ENCODE measurements at regions of chr7 and their contacts with region 1.

Region 1: GRCh38 chr7:55365675-55366460 is 731 bp downstream of the LANCL2 start:
- DNase-seq: peak; percentile 95 to 100 (median 99)
- ATAC-seq: peak; percentile 96
- H3K4me3 ChIP-seq: peak overlapping the region; percentile 95
- H3K4me3 Mint-ChIP-seq: peak overlapping the region; percentile 84 to 98 (median 95)
- H3K27ac ChIP-seq: peak overlapping the region; percentile 98
- H3K27ac Mint-ChIP-seq: peak overlapping the region; percentile 96 to 100 (median 98)
- H3K4me1 ChIP-seq: peaks cover 6 to 10% of the 10 kb centered on the region in 2 donors
- H3K4me1 Mint-ChIP-seq: peaks cover 10 to 30% (median 21%) of the 10 kb centered on the region in 7 donors
- H3K27me3 ChIP-seq: no peaks in the 10 kb centered on the region
- H3K27me3 Mint-ChIP-seq: peaks cover 0 to 2% (median 0%) of the 10 kb centered on the region in 5 donors

Region 2: GRCh38 chr7:54729107-54729506 is 636.8 kb before region 1 on chr7:
- CTCF ChIA-PET with region 1: no interaction called
- POLR2A ChIA-PET with region 1: no interaction called
- intact Hi-C with region 1: no loop called
- DNase-seq: no peak
- ATAC-seq: no peak
- H3K4me3 ChIP-seq: no peak overlapping the region
- H3K4me3 Mint-ChIP-seq: no peak overlapping the region
- H3K27ac ChIP-seq: no peak overlapping the region
- H3K27ac Mint-ChIP-seq: no peak overlapping the region
- H3K4me1 ChIP-seq: no peaks in the 10 kb centered on the region
- H3K4me1 Mint-ChIP-seq: no peaks in the 10 kb centered on the region
- H3K27me3 ChIP-seq: no peaks in the 10 kb centered on the region
- H3K27me3 Mint-ChIP-seq: peaks cover 0 to 9% (median 5%) of the 10 kb centered on the region in 5 donors

Region 3: GRCh38 chr7:54773472-54774399 is 592.1 kb before region 1 on chr7:
- CTCF ChIA-PET with region 1: no interaction called
- POLR2A ChIA-PET with region 1: no interaction called
- intact Hi-C with region 1: loop called (anchors 5 kb)
- DNase-seq: peak; percentile 18 to 67 (median 49)
- ATAC-seq: peak; percentile 94
- H3K4me3 ChIP-seq: peak overlapping the region; percentile 50
- H3K4me3 Mint-ChIP-seq: peak overlapping the region; percentile 60 to 86 (median 79)
- H3K27ac ChIP-seq: no peak overlapping the region
- H3K27ac Mint-ChIP-seq: peak overlapping the region in 7 of 9 donors; percentile 22 to 79 (median 66)
- H3K4me1 ChIP-seq: no peaks in the 10 kb centered on the region
- H3K4me1 Mint-ChIP-seq: peaks cover 0 to 11% (median 4%) of the 10 kb centered on the region in 7 donors
- H3K27me3 ChIP-seq: no peaks in the 10 kb centered on the region
- H3K27me3 Mint-ChIP-seq: peaks cover 8 to 36% (median 35%) of the 10 kb centered on the region in 5 donors

Region 4: DNA sequence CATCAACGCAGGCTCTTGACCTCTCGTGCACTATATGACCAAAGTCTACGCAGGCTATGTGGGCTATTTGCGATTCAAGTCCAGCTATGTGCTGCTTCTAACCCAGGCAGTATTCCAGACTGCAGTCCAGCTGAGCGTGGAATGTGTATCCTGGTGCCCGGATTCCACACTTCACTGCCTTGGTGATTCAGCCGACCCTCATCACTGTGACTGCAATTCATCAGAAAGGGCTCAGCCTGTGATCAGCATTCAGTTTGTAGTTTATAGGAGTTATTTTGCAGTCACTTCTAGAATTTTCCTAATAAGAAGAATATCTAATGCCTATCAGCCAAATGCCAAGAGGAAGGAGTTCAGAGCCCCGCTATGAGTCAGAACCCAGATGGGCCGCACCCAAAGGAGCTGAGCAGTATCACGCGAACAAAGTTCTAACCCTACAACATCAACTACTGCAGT is 120.6 kb before region 1 on chr7:
- CTCF ChIA-PET with region 1: no interaction called
- POLR2A ChIA-PET with region 1: no interaction called
- intact Hi-C with region 1: no loop called
- DNase-seq: no peak
- ATAC-seq: no peak
- H3K4me3 ChIP-seq: no peak overlapping the region
- H3K4me3 Mint-ChIP-seq: no peak overlapping the region
- H3K27ac ChIP-seq: no peak overlapping the region
- H3K27ac Mint-ChIP-seq: no peak overlapping the region
- H3K4me1 ChIP-seq: no peaks in the 10 kb centered on the region
- H3K4me1 Mint-ChIP-seq: no peaks in the 10 kb centered on the region
- H3K27me3 ChIP-seq: no peaks in the 10 kb centered on the region
- H3K27me3 Mint-ChIP-seq: peaks cover 2 to 21% (median 18%) of the 10 kb centered on the region in 5 donors

Region 5: DNA sequence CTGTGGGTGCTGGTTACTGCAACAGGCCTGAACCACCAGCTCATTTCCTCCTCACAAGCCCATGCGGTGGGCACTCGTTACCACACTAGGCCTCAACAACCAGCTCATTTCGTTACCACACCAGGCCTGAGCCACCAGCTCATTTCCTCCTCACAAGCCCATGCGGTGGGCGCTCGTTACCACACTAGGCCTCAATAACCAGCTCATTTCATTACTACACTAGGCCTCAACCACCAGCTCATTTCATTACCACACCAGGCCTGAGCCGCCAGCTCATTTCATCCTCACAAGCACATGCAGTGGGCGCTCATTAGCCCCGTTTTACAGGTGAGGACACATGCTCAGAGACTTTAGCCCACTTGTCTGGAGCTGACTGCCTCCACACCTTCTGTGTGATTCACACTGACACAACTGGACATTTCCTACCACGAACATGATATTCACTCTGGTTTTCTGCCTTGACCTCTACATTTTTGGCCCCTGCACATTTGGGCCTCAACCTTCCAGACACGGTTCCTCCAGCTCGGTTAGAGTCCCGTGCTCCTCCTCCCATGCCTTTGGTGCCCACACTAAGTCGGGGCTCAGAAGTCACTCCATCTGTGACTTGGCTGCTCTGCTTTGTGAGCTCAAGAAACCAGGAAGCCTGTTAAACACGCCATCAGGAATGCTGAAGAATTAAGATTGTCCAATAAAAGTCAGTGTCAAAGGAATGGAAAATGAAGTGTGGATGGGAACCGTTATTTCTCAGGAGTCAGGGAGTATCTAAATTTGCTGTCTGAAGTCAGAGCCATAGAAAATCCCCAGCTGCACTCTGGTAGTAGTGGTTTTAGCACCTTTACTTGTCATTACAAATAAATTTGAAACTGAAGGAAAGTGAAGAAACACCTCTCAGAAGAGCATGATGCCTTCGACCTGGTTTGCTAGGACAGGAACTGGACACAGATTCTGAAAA is 56.6 kb before region 1 on chr7:
- CTCF ChIA-PET with region 1: no interaction called
- POLR2A ChIA-PET with region 1: no interaction called
- intact Hi-C with region 1: loop called in 1 of 2 experiments (anchors 5 kb)
- DNase-seq: peak in 2 of 9 donors; percentile 10 to 61
- ATAC-seq: peak; percentile 85
- H3K4me3 ChIP-seq: no peak overlapping the region
- H3K4me3 Mint-ChIP-seq: peak overlapping the region in 1 of 10 donors; percentile 52
- H3K27ac ChIP-seq: no peak overlapping the region
- H3K27ac Mint-ChIP-seq: peak overlapping the region in 1 of 9 donors; percentile 74
- H3K4me1 ChIP-seq: peaks cover 0 to 41% of the 10 kb centered on the region in 2 donors
- H3K4me1 Mint-ChIP-seq: peaks cover 0 to 33% (median 0%) of the 10 kb centered on the region in 7 donors
- H3K27me3 ChIP-seq: no peaks in the 10 kb centered on the region
- H3K27me3 Mint-ChIP-seq: peaks cover 0 to 10% (median 6%) of the 10 kb centered on the region in 5 donors

Region 6: GRCh38 chr7:55477781-55478374 is 112.0 kb after region 1 on chr7:
- CTCF ChIA-PET with region 1: no interaction called
- POLR2A ChIA-PET with region 1: no interaction called
- intact Hi-C with region 1: loop called in 1 of 2 experiments (anchors 5 kb)
- DNase-seq: no peak
- ATAC-seq: no peak
- H3K4me3 ChIP-seq: no peak overlapping the region
- H3K4me3 Mint-ChIP-seq: peak overlapping the region in 7 of 10 donors; percentile 0 to 79 (median 66)
- H3K27ac ChIP-seq: peak overlapping the region; percentile 61
- H3K27ac Mint-ChIP-seq: peak overlapping the region; percentile 35 to 95 (median 92)
- H3K4me1 ChIP-seq: peaks cover 37 to 64% of the 10 kb centered on the region in 2 donors
- H3K4me1 Mint-ChIP-seq: peaks cover 48 to 98% (median 86%) of the 10 kb centered on the region in 7 donors
- H3K27me3 ChIP-seq: no peaks in the 10 kb centered on the region
- H3K27me3 Mint-ChIP-seq: no peaks in the 10 kb centered on the region

Region 7: GRCh38 chr7:55887821-55888247 is 522.0 kb after region 1 on chr7:
- CTCF ChIA-PET with region 1: no interaction called
- POLR2A ChIA-PET with region 1: no interaction called
- intact Hi-C with region 1: loop called (anchors 1 to 5 kb)
- DNase-seq: peak in 2 of 9 donors; percentile 2 to 6
- ATAC-seq: no peak
- H3K4me3 ChIP-seq: peak overlapping the region; percentile 46
- H3K4me3 Mint-ChIP-seq: peak overlapping the region; percentile 82 to 89 (median 86)
- H3K27ac ChIP-seq: peak overlapping the region; percentile 61
- H3K27ac Mint-ChIP-seq: peak overlapping the region; percentile 83 to 94 (median 90)
- H3K4me1 ChIP-seq: no peaks in the 10 kb centered on the region
- H3K4me1 Mint-ChIP-seq: peaks cover 0 to 10% (median 5%) of the 10 kb centered on the region in 7 donors
- H3K27me3 ChIP-seq: no peaks in the 10 kb centered on the region
- H3K27me3 Mint-ChIP-seq: no peaks in the 10 kb centered on the region

Region 8: GRCh38 chr7:56106108-56107073 is 740.5 kb after region 1 on chr7 and contains the start of gene CHCHD2:
- CTCF ChIA-PET with region 1: no interaction called
- POLR2A ChIA-PET with region 1: interaction called, 4 read pairs
- intact Hi-C with region 1: loop called (anchors 1 kb)
- DNase-seq: peak; percentile 75 to 96 (median 93)
- ATAC-seq: peak; percentile 99
- H3K4me3 ChIP-seq: peak within 1 kb of the TSS; percentile 72
- H3K4me3 Mint-ChIP-seq: peak within 1 kb of the TSS; percentile 94 to 100 (median 96)
- H3K27ac ChIP-seq: peak within 1 kb of the TSS; percentile 95
- H3K27ac Mint-ChIP-seq: peak within 1 kb of the TSS; percentile 97 to 99 (median 98)
- H3K4me1 ChIP-seq: peaks cover 18 to 20% of the 10 kb centered on the region in 2 donors
- H3K4me1 Mint-ChIP-seq: peaks cover 19 to 43% (median 33%) of the 10 kb centered on the region in 7 donors
- H3K27me3 ChIP-seq: no peaks in the 10 kb centered on the region
- H3K27me3 Mint-ChIP-seq: no peaks in the 10 kb centered on the region
- total RNA-seq, gene CHCHD2: 133 to 451 (median 179) TPM

Measured in naive thymus-derived CD4-positive, alpha-beta T cell (primary cell).